CD4-positive, alpha-beta T cell (primary cell): ENCODE measurements at regions of chr19 and their contacts with region 1.

Region 1: GRCh38 chr19:55586976-55587668 is 6.5 kb upstream of the ZNF579 start:
- DNase-seq: peak; percentile 85 to 96 (median 91)
- ATAC-seq: peak; percentile 95
- H3K4me3 ChIP-seq: peak overlapping the region; percentile 46
- H3K4me3 Mint-ChIP-seq: peak overlapping the region; percentile 90
- H3K27ac ChIP-seq: no peak overlapping the region
- H3K27ac Mint-ChIP-seq: peak overlapping the region; percentile 71
- H3K4me1 ChIP-seq: peaks cover 29% of the 10 kb centered on the region
- H3K4me1 Mint-ChIP-seq: peaks cover 41% of the 10 kb centered on the region
- H3K27me3 ChIP-seq: no peaks in the 10 kb centered on the region
- H3K27me3 Mint-ChIP-seq: no peaks in the 10 kb centered on the region
- CTCF ChIP-seq: no peak

Region 2: GRCh38 chr19:55516878-55517620 is 70.1 kb before region 1 on chr19:
- CTCF ChIA-PET with region 1: no interaction called
- POLR2A ChIA-PET with region 1: no interaction called
- intact Hi-C with region 1: loop called in 1 of 2 experiments (anchors 5 kb)
- DNase-seq: peak; percentile 82 to 95 (median 88)
- ATAC-seq: peak; percentile 100
- H3K4me3 ChIP-seq: peak overlapping the region; percentile 32
- H3K4me3 Mint-ChIP-seq: peak overlapping the region; percentile 74
- H3K27ac ChIP-seq: peak overlapping the region in 1 of 2 donors; percentile 37
- H3K27ac Mint-ChIP-seq: peak overlapping the region; percentile 73
- H3K4me1 ChIP-seq: peaks cover 11% of the 10 kb centered on the region
- H3K4me1 Mint-ChIP-seq: peaks cover 4% of the 10 kb centered on the region
- H3K27me3 ChIP-seq: no peaks in the 10 kb centered on the region
- H3K27me3 Mint-ChIP-seq: no peaks in the 10 kb centered on the region
- CTCF ChIP-seq: peak; percentile 78

Region 3: DNA sequence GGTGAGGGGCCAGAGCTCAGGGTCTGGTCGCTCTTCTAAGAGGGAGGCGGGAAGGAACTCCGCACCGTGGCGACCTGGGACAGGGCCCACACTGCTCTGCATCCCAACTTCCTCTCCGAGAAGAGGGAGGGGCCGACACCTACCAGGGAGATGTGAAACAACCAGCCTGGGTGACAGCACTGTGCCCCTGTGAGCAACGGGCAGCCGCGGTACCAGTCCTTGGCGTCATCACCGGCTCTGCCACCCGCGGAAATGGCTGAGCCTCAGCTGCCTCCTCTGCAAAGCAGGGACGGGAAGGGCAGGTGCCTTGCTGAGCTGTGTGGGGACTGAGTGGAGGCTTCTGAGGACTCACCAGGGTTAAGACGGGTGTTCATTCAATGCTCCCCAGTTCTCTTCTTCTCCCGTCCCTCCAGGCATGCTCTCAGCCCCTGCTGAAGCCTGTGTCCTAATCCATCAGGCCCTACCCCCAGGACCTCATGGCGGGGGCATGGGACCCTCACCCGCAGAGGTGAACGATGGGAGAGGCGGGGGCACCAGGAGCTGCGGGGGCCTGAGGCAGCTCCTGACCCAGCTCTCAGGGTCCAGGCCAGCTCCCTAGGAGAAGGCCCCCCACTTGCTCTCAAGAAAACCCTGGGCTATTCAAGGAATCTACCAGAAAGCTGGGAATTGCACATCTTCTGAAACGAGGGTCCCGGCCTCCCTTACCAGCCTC is 524.6 kb after region 1 on chr19:
- CTCF ChIA-PET with region 1: no interaction called
- POLR2A ChIA-PET with region 1: no interaction called
- intact Hi-C with region 1: no loop called
- DNase-seq: peak in 9 of 14 experiments; percentile 20 to 81 (median 46)
- ATAC-seq: peak; percentile 98
- H3K4me3 ChIP-seq: no peak overlapping the region
- H3K4me3 Mint-ChIP-seq: peak overlapping the region; percentile 79
- H3K27ac ChIP-seq: peak overlapping the region in 1 of 2 donors; percentile 48
- H3K27ac Mint-ChIP-seq: peak overlapping the region; percentile 91
- H3K4me1 ChIP-seq: peaks cover 72% of the 10 kb centered on the region
- H3K4me1 Mint-ChIP-seq: peaks cover 64% of the 10 kb centered on the region
- H3K27me3 ChIP-seq: no peaks in the 10 kb centered on the region
- H3K27me3 Mint-ChIP-seq: no peaks in the 10 kb centered on the region
- CTCF ChIP-seq: no peak